T-cell (primary cell): ENCODE measurements at regions of chr10 and their contacts with region 1.

Region 1: DNA sequence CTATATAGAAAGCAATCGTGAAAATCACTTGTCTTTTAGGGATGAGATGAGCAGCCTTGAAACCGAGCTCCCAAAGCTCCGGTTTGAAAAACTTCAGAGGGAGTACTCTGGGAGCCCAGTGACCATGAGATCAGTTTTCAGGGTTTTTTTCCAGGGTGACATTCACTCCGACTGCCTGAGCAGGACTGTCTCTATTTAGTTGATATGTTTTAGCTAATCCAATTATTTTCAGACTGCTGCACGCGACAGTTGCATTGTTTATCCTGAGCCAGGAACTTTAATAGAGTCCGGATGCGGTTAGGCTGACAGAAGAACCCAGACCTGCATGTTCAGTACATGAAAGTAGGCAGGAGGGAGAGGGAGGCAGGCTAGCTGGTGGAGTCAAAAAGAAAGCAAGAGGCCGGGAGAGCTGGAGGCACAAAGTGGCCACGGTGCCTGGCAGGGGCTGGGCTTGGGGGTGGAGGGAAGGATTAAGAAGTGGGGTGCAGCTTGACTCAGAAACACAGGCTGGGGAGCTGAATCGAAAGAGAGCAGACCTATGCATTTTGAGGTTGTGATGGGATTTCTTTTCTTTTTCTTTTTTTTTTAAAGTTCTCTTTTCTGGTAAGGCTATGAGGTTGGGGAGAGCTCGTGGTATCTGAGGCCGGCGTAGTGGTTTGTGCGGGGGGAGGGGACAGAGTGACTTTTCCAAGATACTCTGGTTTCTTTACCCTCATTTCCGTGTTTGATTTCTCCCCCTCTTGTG is 5.6 kb downstream of the GATA3 start:
- DNase-seq: peak in 27 of 35 experiments; percentile 37 to 79 (median 55)
- ATAC-seq: peak; percentile 36 to 46 (median 42)
- H3K4me3 ChIP-seq: peak overlapping the region; percentile 67 to 94
- H3K4me3 Mint-ChIP-seq: peak overlapping the region; percentile 92 to 99 (median 95)
- H3K27ac ChIP-seq: peak overlapping the region; percentile 85
- H3K27ac Mint-ChIP-seq: peak overlapping the region; percentile 98 to 99
- H3K4me1 ChIP-seq: peaks cover 31 to 72% of the 10 kb centered on the region in 2 experiments
- H3K4me1 Mint-ChIP-seq: peaks cover 76 to 80% (median 80%) of the 10 kb centered on the region in 3 donors
- H3K27me3 ChIP-seq: no peaks in the 10 kb centered on the region
- H3K27me3 Mint-ChIP-seq: no peaks in the 10 kb centered on the region

Region 2: GRCh38 chr10:8071006-8071405 is 10.9 kb after region 1 on chr10:
- CTCF ChIA-PET with region 1: interaction called, 4 to 5 read pairs
- POLR2A ChIA-PET with region 1: interaction called, 5 to 17 read pairs
- DNase-seq: no peak
- ATAC-seq: no peak
- H3K4me3 ChIP-seq: no peak overlapping the region
- H3K4me3 Mint-ChIP-seq: no peak overlapping the region
- H3K27ac ChIP-seq: no peak overlapping the region
- H3K27ac Mint-ChIP-seq: peak overlapping the region; percentile 82 to 87
- H3K4me1 ChIP-seq: peaks cover 4 to 29% of the 10 kb centered on the region in 2 experiments
- H3K4me1 Mint-ChIP-seq: peaks cover 71 to 81% (median 77%) of the 10 kb centered on the region in 3 donors
- H3K27me3 ChIP-seq: no peaks in the 10 kb centered on the region
- H3K27me3 Mint-ChIP-seq: no peaks in the 10 kb centered on the region